Transverse colon (tissue), 4 donors: ENCODE measurements at regions of chr7 and their contacts with region 1.

Region 1: GRCh38 chr7:105652359-105652993 is 71.2 kb upstream of the EFCAB10 start:
- DNase-seq: peak; percentile 83
- H3K4me3 ChIP-seq: no peak overlapping the region
- H3K27ac ChIP-seq: no peak overlapping the region
- H3K4me1 ChIP-seq: peaks cover 7 to 16% (median 10%) of the 10 kb centered on the region in 4 donors
- H3K27me3 ChIP-seq: no peaks in the 10 kb centered on the region
- CTCF ChIP-seq: peak; percentile 78 to 86 (median 83)
- EP300 ChIP-seq: no peak
- POLR2A ChIP-seq: no peak

Region 2: DNA sequence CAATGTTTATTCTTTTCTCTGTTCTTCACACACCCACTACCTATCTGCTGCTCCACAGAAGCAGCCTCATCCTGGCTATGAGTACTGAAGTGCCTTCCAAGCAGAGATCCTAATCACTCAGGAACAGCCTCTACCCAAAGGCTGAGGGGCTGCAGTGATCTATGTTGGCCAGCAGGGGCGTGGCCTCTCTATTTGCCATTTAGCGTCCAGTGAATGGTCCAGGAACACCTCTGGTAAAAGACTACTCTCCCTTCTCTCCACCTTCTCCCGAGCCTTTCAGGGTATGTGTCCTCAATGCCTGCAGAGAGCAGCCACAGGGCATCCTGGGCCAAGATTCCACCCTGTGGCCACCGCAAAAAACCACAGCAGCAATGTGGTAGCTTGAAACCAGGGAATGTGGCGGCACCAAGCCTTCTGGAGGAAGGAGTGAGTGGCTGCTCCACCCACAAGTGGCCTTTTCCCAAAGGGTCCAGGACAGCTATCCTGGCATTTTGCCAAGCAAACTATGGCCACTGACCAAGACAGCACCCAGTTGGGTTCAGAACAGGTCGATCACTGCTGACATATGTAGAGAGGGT is 388.8 kb after region 1 on chr7:
- in situ Hi-C with region 1: loop called (anchors 10 to 25 kb)
- intact Hi-C with region 1: loop called (anchors 5 kb)
- DNase-seq: no peak
- H3K4me3 ChIP-seq: no peak overlapping the region
- H3K27ac ChIP-seq: no peak overlapping the region
- H3K4me1 ChIP-seq: peaks cover 0 to 12% (median 6%) of the 10 kb centered on the region in 4 donors
- H3K27me3 ChIP-seq: no peaks in the 10 kb centered on the region
- CTCF ChIP-seq: peak; percentile 59 to 74 (median 71)
- EP300 ChIP-seq: no peak
- POLR2A ChIP-seq: no peak

Region 3: GRCh38 chr7:106239404-106239803 is 586.9 kb after region 1 on chr7:
- in situ Hi-C with region 1: no loop called
- intact Hi-C with region 1: no loop called
- DNase-seq: no peak
- H3K4me3 ChIP-seq: no peak overlapping the region
- H3K27ac ChIP-seq: peak overlapping the region in 1 of 4 donors; percentile 27
- H3K4me1 ChIP-seq: peaks cover 0 to 6% (median 0%) of the 10 kb centered on the region in 4 donors
- H3K27me3 ChIP-seq: no peaks in the 10 kb centered on the region
- CTCF ChIP-seq: no peak
- EP300 ChIP-seq: no peak
- POLR2A ChIP-seq: no peak